Upper lobe of right lung (tissue), 1 donor: ENCODE measurements at regions of chr3 and their contacts with region 1.

Region 1: DNA sequence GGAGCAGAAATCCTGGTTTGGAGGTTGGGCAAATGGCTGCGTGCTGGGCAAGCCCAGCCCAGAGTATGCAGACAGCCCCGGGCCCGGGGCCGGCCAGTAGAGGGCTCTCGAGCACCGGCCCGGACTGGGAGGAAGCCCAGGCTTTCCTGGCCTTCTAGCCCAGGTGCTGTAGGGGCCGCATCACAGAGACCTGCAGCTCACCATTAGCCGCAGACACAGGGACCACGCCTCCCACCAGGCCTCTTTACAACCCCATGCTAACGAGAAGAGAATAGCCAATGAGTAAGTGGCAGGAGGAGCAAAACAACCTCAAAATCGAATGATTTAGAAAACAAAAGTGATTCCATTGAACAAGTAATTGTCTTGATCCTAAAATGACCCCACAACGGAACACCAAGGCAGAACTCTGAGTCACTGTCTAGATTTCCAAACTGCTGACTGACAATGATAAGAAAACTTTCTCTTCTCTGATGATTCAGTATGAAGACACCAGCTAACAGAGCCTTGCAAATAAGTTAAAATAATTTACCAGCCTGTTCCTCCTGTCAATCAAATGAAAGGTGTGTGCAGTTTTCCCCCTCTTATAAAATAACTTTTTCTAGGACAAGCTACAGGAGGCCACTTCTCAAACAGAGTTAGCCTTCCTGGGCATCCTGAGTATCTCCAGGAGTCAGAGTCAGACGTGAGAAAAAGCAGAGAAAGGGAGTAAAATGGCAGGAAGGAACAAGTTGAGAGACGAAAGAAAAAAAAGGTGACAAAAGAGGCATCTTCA is 102.2 kb downstream of the DGKG start:
- DNase-seq: peak; percentile 86
- ATAC-seq: peak; percentile 93
- H3K4me3 ChIP-seq: no peak overlapping the region
- H3K27ac ChIP-seq: no peak overlapping the region
- H3K4me1 ChIP-seq: peaks cover 5% of the 10 kb centered on the region
- H3K27me3 ChIP-seq: no peaks in the 10 kb centered on the region
- CTCF ChIP-seq: peak; percentile 84

Region 2: DNA sequence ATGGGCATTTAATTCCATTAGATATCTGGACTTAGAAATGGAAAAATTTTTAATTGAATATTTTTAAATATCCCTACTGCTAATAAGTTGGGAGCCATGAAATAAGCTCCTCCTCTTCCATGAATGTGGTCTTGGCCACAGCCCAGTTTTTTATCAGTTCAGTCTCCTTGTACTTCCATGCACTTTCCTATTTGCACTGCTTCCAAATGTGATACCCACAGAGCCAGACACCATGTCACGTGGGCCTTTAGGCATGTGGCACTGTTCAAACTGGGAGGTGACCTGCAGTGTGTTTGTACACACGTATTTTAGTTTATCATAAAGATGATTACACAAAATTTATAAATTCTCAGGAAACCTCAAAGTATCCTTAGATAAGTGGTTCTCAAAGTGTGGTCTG is 182.4 kb after region 1 on chr3:
- intact Hi-C with region 1: no loop called
- DNase-seq: no peak
- ATAC-seq: no peak
- H3K4me3 ChIP-seq: no peak overlapping the region
- H3K27ac ChIP-seq: no peak overlapping the region
- H3K4me1 ChIP-seq: no peaks in the 10 kb centered on the region
- H3K27me3 ChIP-seq: no peaks in the 10 kb centered on the region
- CTCF ChIP-seq: no peak

Region 3: DNA sequence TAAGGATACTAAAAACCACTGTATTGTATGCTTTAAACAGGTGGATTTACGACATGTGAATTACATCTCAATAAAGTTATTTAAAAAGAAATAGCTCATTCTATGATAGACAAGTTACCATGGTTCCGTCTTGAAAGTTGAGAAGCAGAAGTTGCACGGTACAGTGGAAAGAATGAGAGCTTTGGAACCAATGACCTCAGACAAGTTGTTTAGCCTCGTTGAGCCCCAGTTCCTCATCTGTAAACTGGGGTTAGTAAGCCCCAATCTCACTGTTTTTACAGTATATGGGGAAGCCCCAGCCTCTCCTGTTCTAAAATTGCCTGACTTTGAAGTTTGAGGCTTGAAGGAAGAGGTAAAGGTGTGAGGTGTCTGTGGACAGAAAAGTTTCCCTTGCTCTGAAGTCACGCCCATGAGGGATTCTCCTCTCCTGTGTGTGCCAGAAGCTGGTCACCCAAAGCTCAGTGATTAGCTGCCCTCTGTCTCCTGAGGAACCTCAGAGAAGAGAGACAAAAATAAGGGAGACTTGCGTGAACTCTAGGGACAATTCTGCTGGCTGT is 274.4 kb after region 1 on chr3:
- intact Hi-C with region 1: loop called (anchors 10 kb)
- DNase-seq: no peak
- ATAC-seq: peak; percentile 79
- H3K4me3 ChIP-seq: no peak overlapping the region
- H3K27ac ChIP-seq: no peak overlapping the region
- H3K4me1 ChIP-seq: no peaks in the 10 kb centered on the region
- H3K27me3 ChIP-seq: no peaks in the 10 kb centered on the region
- CTCF ChIP-seq: no peak